Lower leg skin (tissue), 4 donors: ENCODE measurements at regions of chr18 and their contacts with region 1.

Region 1: DNA sequence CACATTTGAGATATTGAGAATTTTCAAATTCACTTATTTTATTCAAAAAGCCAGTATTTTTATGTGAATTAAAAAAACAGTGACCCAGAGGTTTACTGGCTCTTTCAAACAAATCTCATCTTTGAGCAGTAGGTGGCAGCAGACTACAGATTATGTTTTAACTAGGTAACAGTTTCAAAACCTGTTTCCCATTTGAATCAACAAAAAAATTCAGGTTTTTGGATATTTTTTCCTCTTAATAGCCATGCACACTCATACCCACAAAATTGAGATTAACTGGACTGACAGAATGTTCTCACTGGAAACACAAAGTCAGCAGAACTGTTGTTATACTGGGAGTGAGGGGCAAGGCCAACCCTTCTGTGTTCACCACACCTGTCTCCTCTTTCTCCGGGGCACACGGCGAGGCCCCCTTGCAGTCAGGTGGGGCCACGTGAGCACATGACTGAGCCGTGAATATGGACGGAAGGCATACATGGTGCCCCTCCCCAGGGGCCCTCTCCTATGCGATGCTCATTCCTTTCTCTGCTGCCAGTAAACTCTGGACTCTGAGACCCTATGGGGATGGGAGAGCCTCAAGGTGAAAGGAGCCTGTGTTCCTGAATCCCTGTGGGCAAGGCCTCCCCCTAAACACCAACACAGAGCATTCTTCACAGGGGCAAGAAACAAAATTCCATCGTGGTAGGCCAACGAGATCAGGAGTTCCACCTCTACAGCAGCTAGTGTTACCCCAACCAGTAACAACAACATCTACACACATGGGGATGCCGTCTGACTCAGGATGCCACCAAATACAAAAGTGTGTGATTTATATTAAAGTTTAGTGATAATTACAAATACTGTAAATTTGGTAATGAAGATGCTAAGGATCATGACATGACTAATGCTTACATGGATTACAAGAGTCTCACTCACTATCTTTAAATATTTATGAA is 80.4 kb downstream of the LPIN2 start:
- DNase-seq: peak in 1 of 2 donors; percentile 51
- H3K4me3 ChIP-seq: no peak overlapping the region
- CTCF ChIP-seq: no peak
- POLR2A ChIP-seq: no peak

Region 2: DNA sequence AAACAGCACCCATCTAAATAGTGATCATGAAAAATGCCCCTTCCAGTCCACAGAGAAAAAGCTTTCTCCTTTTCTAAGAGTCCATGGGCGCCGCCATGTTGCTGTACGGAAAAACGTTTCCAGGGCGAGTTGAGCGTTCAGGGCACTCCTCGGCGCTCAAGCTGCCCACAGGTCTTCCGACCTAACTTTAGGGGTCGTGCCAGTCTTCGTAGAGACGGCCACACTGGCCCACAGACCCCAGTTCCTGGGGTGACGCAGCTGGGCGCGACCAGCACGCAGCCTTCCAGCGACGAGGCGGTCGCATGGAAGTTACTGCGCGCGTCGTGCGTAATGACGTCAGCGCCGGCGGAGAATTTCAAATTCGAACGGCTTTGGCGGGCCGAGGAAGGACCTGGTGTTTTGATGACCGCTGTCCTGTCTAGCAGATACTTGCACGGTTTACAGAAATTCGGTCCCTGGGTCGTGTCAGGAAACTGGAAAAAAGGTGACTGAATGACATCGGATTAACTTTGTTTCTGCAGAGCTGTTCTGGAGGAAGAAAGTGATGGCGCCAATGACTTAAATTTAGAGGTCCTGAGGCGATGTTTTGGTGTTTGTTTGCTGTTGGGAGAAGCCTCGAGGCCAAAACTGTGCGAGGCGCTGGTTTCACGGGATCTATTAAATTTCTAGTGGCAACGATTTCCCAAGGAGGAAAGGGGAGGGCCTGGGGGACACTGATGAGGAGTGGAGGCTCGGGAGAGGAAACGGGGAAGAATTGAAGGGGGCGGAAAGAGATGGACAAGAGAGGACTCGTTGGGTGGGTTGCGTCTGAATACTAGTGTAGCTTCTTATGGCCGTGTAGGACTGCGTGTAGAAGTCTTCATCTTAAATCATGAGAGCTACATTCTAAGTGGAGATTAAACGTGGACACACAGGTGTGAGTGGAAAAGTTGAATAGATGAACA is 361.0 kb before region 1 on chr18 and contains the starts of genes METTL4 and NDC80:
- intact Hi-C with region 1: no loop called
- DNase-seq: peak; percentile 68 to 97
- H3K4me3 ChIP-seq: peak within 1 kb of the TSS; percentile 68
- CTCF ChIP-seq: no peak
- POLR2A ChIP-seq: no peak
- total RNA-seq, gene METTL4: 2.1 to 6.0 (median 4.0) TPM
- total RNA-seq, gene NDC80: 0.29 to 2.4 (median 1.4) TPM

Region 3: GRCh38 chr18:2716394-2717326 is 215.9 kb before region 1 on chr18:
- intact Hi-C with region 1: no loop called
- DNase-seq: no peak
- H3K4me3 ChIP-seq: no peak overlapping the region
- CTCF ChIP-seq: no peak
- POLR2A ChIP-seq: no peak

Region 4: DNA sequence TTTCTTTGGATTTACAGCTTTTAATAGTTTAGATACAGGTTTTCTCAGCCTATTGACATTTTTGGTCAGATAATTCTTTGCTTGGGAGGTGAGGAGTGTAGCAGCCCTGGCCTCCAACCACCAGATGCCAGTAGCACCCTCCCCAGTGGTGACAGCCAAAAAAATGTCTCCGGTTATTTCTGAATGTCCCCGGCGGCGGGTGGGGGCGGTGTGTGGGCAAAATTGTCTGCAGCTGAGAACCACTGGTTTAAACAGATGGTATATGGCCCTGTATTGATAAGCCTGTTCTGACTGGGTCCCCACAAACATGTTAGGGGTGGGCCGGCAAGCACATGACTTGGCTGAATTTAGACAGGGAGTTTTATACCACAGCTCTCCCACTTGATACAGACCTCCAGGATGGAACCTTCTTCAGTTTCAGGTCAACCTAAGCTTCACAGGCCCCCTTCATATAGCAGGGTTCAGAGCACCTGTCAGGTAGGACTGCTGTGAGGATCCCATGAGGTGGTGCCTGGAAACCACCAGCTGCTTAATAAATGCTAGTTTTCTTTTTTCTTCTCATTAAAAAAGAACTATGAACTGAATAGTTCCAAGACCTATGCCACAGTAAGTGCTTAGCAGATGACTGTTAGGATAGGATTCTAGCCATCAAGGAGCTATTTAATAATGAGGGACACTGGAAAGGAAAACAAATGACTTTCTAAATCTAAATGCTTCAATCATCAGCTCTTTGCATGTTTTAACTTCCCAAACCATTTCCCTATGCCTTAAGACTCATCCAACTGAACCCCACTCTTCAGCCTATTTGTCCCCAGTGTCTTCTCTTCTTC is 62.3 kb after region 1 on chr18:
- intact Hi-C with region 1: no loop called
- DNase-seq: no peak
- H3K4me3 ChIP-seq: no peak overlapping the region
- CTCF ChIP-seq: no peak
- POLR2A ChIP-seq: no peak

Region 5: GRCh38 chr18:3062798-3063680 is 130.5 kb after region 1 on chr18:
- intact Hi-C with region 1: loop called (anchors 10 kb)
- DNase-seq: peak; percentile 37 to 91
- H3K4me3 ChIP-seq: no peak overlapping the region
- CTCF ChIP-seq: no peak
- POLR2A ChIP-seq: no peak

Region 6: DNA sequence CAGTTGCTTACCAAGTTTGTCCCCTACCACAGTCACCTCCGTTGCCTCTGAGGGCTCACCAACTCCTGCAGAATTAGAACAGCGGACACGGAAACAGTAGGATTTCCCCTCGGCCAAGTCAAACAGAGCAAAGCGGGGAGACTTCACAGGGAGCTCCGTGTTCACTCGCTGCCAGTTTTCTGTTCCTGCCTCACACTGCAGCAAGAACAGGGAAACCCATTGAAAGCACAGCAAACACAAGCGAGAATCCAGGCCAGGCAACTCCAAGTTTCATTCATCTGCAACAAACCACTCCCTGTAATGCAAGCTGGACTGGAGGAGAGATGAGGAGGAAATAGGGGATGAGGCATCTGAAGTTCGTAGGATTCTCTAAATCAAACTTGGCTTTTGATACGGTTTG is 203.0 kb after region 1 on chr18:
- intact Hi-C with region 1: loop called (anchors 10 kb)
- DNase-seq: no peak
- H3K4me3 ChIP-seq: no peak overlapping the region
- CTCF ChIP-seq: no peak
- POLR2A ChIP-seq: no peak

Region 7: DNA sequence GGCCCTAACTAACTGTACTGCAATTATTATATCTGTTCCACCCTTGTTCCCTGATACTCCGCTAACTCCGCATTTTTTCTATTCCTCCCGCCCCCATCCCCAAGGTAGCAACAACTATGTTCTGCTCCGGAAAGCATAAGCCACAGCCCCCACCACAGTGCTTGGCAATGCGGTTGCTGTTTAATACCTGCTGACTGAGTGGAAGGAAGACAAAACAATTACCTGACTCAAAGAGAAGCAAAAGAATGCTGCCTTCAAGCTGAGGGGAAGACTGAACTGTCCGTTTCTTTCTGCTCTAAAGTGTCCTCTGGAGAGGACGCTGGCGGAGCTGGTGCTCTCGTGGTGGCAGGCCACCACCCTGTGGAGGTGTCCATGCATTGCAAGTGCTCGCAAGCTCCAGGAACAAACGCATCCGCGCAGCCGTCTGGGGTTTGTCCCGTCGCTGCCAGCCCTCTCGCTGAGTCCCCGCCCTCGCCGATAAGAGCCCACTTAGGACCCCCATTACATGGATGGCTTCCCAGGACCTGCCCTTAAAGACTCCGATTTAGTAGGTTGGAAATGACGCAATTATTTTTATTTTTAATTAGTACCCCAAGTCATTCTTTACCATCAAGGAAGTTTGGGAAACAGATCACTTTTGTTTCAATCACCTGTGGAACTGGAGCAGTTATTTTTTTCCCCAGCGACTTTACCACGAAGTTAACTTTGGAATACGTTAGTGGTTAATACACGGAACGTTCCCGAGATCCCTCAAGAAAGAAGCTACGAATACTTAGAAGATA is 313.5 kb after region 1 on chr18:
- intact Hi-C with region 1: loop called (anchors 2 kb)
- DNase-seq: peak; percentile 86 to 97
- H3K4me3 ChIP-seq: peak overlapping the region; percentile 12
- CTCF ChIP-seq: peak in 1 of 3 donors; percentile 81
- POLR2A ChIP-seq: no peak